Activated CD4-positive, alpha-beta memory T cell treated with anti-CD3 and anti-CD28 coated beads for 36 hours (primary cell): ENCODE measurements at regions of chr7 and their contacts with region 1.

Region 1: GRCh38 chr7:138738551-138739335 is 37.6 kb upstream of the SVOPL start:
- DNase-seq: peak; percentile 92
- H3K4me3 Mint-ChIP-seq: no peak overlapping the region
- H3K27ac Mint-ChIP-seq: peak overlapping the region; percentile 23
- H3K4me1 Mint-ChIP-seq: peaks cover 8% of the 10 kb centered on the region
- H3K27me3 Mint-ChIP-seq: no peaks in the 10 kb centered on the region

Region 2: GRCh38 chr7:138161600-138162081 is 577.1 kb before region 1 on chr7:
- CTCF ChIA-PET with region 1: interaction called, 103 read pairs
- POLR2A ChIA-PET with region 1: interaction called, 3 read pairs
- intact Hi-C with region 1: loop called (anchors 1 kb)
- DNase-seq: peak; percentile 82
- H3K4me3 Mint-ChIP-seq: no peak overlapping the region
- H3K27ac Mint-ChIP-seq: no peak overlapping the region
- H3K4me1 Mint-ChIP-seq: no peaks in the 10 kb centered on the region
- H3K27me3 Mint-ChIP-seq: no peaks in the 10 kb centered on the region

Region 3: GRCh38 chr7:138449580-138449979 is 289.2 kb before region 1 on chr7:
- CTCF ChIA-PET with region 1: interaction called, 7 read pairs
- POLR2A ChIA-PET with region 1: no interaction called
- intact Hi-C with region 1: loop called (anchors 1 kb)
- DNase-seq: peak; percentile 43
- H3K4me3 Mint-ChIP-seq: no peak overlapping the region
- H3K27ac Mint-ChIP-seq: peak overlapping the region; percentile 55
- H3K4me1 Mint-ChIP-seq: no peaks in the 10 kb centered on the region
- H3K27me3 Mint-ChIP-seq: no peaks in the 10 kb centered on the region

Region 4: GRCh38 chr7:138608275-138608674 is 130.5 kb before region 1 on chr7:
- CTCF ChIA-PET with region 1: interaction called, 3 read pairs
- POLR2A ChIA-PET with region 1: no interaction called
- intact Hi-C with region 1: loop called (anchors 2 kb)
- DNase-seq: peak; percentile 80
- H3K4me3 Mint-ChIP-seq: no peak overlapping the region
- H3K27ac Mint-ChIP-seq: peak overlapping the region; percentile 36
- H3K4me1 Mint-ChIP-seq: peaks cover 15% of the 10 kb centered on the region
- H3K27me3 Mint-ChIP-seq: no peaks in the 10 kb centered on the region

Region 5: GRCh38 chr7:138865843-138866242 is 127.1 kb after region 1 on chr7:
- CTCF ChIA-PET with region 1: interaction called, 6 read pairs
- POLR2A ChIA-PET with region 1: no interaction called
- intact Hi-C with region 1: loop called (anchors 1 kb)
- DNase-seq: peak; percentile 73
- H3K4me3 Mint-ChIP-seq: no peak overlapping the region
- H3K27ac Mint-ChIP-seq: no peak overlapping the region
- H3K4me1 Mint-ChIP-seq: peaks cover 21% of the 10 kb centered on the region
- H3K27me3 Mint-ChIP-seq: peaks cover 3% of the 10 kb centered on the region